MCF 10A (cell line): ENCODE measurements at regions of chr10 and their contacts with region 1.

Region 1: DNA sequence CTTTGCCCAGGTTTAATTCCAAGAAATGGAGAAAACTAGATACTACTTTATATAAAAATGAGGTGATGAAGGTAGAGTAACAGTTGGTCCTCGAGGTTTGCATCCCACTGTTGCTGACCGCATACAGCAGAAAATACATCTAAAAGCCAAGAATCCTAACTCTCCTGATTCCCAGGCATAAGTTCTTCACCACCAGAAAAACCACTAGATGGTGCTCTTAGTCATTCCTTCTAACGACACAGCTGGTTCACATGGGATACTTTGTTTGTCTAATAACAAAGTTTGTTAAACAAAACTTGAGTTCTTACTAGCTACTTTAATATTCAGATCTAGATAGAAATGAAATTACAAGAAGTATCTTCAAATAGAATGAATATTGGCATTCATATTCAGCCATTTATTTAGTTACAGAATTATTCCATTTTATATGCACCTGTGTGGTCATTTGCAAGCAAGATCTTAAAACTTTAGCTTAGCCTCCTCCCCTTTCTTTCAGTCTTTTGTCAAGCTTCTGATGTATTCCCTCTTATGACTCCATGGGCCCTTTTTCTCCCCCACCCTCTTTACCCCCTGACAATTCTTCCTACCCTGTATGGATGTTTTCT is 54.1 kb upstream of the CYP26C1 start:
- DNase-seq: peak; percentile 67
- H3K4me3 Mint-ChIP-seq: no peak overlapping the region
- H3K27ac Mint-ChIP-seq: no peak overlapping the region
- H3K4me1 Mint-ChIP-seq: peaks cover 7% of the 10 kb centered on the region
- H3K27me3 Mint-ChIP-seq: no peaks in the 10 kb centered on the region
- CTCF ChIP-seq: peak; percentile 68

Region 2: GRCh38 chr10:92886334-92886961 is 120.1 kb before region 1 on chr10:
- CTCF ChIA-PET with region 1: interaction called, 10 read pairs
- POLR2A ChIA-PET with region 1: interaction called, 3 read pairs
- intact Hi-C with region 1: loop called (anchors 1 kb)
- DNase-seq: peak; percentile 2
- H3K4me3 Mint-ChIP-seq: no peak overlapping the region
- H3K27ac Mint-ChIP-seq: no peak overlapping the region
- H3K4me1 Mint-ChIP-seq: peaks cover 5% of the 10 kb centered on the region
- H3K27me3 Mint-ChIP-seq: no peaks in the 10 kb centered on the region
- CTCF ChIP-seq: no peak

Region 3: DNA sequence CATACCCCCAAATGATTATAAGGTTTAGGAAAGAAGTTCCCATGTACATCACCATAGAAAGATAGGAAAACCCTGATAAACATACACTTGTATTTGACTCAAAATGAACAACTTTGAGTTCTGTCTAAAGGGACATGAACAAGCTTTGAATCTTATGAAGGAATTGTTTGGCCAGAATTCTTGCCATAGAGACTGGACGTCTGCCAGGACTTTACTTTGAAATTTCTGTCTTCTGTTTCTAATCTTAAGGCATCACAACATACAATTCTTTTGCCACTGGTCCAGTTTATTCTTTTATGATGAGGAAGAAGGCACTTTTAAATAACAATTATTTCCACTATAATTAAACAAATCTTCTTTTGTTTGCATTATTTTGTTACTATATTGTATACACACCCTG is 27.9 kb after region 1 on chr10:
- CTCF ChIA-PET with region 1: interaction called, 56 read pairs
- POLR2A ChIA-PET with region 1: no interaction called
- intact Hi-C with region 1: loop called (anchors 1 kb)
- DNase-seq: no peak
- H3K4me3 Mint-ChIP-seq: no peak overlapping the region
- H3K27ac Mint-ChIP-seq: no peak overlapping the region
- H3K4me1 Mint-ChIP-seq: peaks cover 9% of the 10 kb centered on the region
- H3K27me3 Mint-ChIP-seq: no peaks in the 10 kb centered on the region
- CTCF ChIP-seq: no peak

Region 4: DNA sequence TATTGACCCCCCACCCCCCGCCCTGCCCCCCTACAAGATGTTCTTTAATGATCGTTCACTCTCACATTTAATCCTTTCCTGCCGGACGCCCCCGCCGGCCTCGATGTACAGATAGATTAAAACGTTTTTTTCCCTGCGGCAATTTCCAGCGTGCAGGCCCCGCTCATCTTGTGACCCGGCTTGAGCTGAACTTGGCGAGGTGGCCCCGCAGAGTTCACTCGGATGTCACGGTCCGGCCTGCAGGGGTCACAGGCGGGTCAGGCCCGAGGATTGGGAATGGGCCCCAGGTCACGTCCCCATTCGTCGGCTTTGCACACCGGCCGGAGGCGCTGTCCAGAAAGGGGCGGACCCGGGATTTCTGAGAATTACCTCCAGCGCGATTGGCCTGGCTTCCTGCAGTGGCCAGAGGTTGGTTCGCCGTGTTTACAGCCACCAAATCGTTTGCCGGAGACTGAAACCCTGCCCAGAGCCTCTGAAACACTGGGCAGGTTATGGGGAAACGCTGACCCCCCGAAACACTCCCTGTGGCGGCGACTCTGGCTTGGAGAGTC is 65.2 kb after region 1 on chr10:
- CTCF ChIA-PET with region 1: interaction called, 10 read pairs
- POLR2A ChIA-PET with region 1: no interaction called
- intact Hi-C with region 1: loop called (anchors 2 kb)
- DNase-seq: no peak
- H3K4me3 Mint-ChIP-seq: peak overlapping the region; percentile 65
- H3K27ac Mint-ChIP-seq: no peak overlapping the region
- H3K4me1 Mint-ChIP-seq: no peaks in the 10 kb centered on the region
- H3K27me3 Mint-ChIP-seq: peaks cover 74% of the 10 kb centered on the region
- CTCF ChIP-seq: no peak

Region 5: DNA sequence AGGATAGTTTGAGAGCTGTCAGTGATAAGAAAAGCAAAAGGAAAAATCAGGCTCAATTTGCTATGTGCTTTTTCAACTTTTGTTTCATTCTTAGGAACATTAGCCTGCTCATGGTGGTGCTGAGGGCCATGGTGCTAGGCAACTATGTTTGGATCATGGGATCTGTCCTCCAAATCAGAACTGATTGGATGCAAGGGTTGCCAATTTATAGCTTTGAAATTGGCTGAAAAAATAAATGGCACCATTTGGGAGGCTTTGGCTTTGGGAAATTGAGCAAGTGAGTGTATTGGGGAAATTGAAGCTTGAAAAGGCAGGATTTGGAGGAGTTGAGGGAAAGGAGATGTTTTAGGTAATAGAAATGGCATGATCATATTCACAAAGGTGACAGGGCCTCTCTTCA is 171.0 kb after region 1 on chr10:
- CTCF ChIA-PET with region 1: interaction called, 12 read pairs
- POLR2A ChIA-PET with region 1: no interaction called
- intact Hi-C with region 1: no loop called
- DNase-seq: no peak
- H3K4me3 Mint-ChIP-seq: no peak overlapping the region
- H3K27ac Mint-ChIP-seq: no peak overlapping the region
- H3K4me1 Mint-ChIP-seq: no peaks in the 10 kb centered on the region
- H3K27me3 Mint-ChIP-seq: no peaks in the 10 kb centered on the region
- CTCF ChIP-seq: no peak

Region 6: GRCh38 chr10:93352638-93353383 is 346.3 kb after region 1 on chr10:
- CTCF ChIA-PET with region 1: interaction called, 6 read pairs
- POLR2A ChIA-PET with region 1: no interaction called
- intact Hi-C with region 1: loop called (anchors 1 kb)
- DNase-seq: peak; percentile 46
- H3K4me3 Mint-ChIP-seq: no peak overlapping the region
- H3K27ac Mint-ChIP-seq: no peak overlapping the region
- H3K4me1 Mint-ChIP-seq: no peaks in the 10 kb centered on the region
- H3K27me3 Mint-ChIP-seq: no peaks in the 10 kb centered on the region
- CTCF ChIP-seq: peak; percentile 51